B cell (primary cell): ENCODE measurements at regions of chr7 and their contacts with region 1.

Region 1: DNA sequence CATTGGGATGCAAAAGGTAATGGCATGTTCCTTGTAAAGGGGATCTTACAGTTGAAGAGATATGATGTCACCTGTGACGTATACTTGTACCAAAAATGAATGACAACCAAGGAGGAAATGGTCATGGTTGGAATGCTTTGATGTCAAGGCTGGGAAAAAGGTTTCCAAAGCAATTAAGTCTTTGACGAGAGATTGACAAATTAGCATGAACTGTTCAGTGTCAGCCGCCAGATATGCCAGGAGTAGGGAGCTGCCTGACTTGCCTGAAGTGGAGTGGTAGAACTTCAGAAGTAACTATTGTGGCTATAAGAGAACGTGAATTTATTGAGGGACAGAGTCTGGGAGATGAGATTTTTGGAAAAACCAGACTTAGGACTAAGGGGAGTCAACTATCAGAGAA is 88.1 kb downstream of the SEPTIN7 start:
- DNase-seq: no peak
- ATAC-seq: no peak
- H3K4me3 ChIP-seq: no peak overlapping the region
- H3K4me3 Mint-ChIP-seq: no peak overlapping the region
- H3K27ac ChIP-seq: no peak overlapping the region
- H3K27ac Mint-ChIP-seq: no peak overlapping the region
- H3K4me1 ChIP-seq: no peaks in the 10 kb centered on the region
- H3K4me1 Mint-ChIP-seq: peaks cover 12% of the 10 kb centered on the region
- H3K27me3 ChIP-seq: no peaks in the 10 kb centered on the region
- H3K27me3 Mint-ChIP-seq: no peaks in the 10 kb centered on the region
- CTCF ChIP-seq: no peak

Region 2: GRCh38 chr7:35492451-35493175 is 396.4 kb before region 1 on chr7:
- CTCF ChIA-PET with region 1: no interaction called
- POLR2A ChIA-PET with region 1: no interaction called
- intact Hi-C with region 1: no loop called
- DNase-seq: no peak
- ATAC-seq: no peak
- H3K4me3 ChIP-seq: no peak overlapping the region
- H3K4me3 Mint-ChIP-seq: no peak overlapping the region
- H3K27ac ChIP-seq: no peak overlapping the region
- H3K27ac Mint-ChIP-seq: no peak overlapping the region
- H3K4me1 ChIP-seq: peaks cover 0 to 4% of the 10 kb centered on the region in 2 donors
- H3K4me1 Mint-ChIP-seq: no peaks in the 10 kb centered on the region
- H3K27me3 ChIP-seq: peaks cover 0 to 2% (median 0%) of the 10 kb centered on the region in 4 experiments
- H3K27me3 Mint-ChIP-seq: peaks cover 20% of the 10 kb centered on the region
- CTCF ChIP-seq: no peak

Region 3: GRCh38 chr7:35839860-35840854 is 48.8 kb before region 1 on chr7:
- CTCF ChIA-PET with region 1: no interaction called
- POLR2A ChIA-PET with region 1: no interaction called
- intact Hi-C with region 1: no loop called
- DNase-seq: no peak
- ATAC-seq: no peak
- H3K4me3 ChIP-seq: no peak overlapping the region
- H3K4me3 Mint-ChIP-seq: no peak overlapping the region
- H3K27ac ChIP-seq: peak overlapping the region in 1 of 2 donors; percentile 12
- H3K27ac Mint-ChIP-seq: no peak overlapping the region
- H3K4me1 ChIP-seq: no peaks in the 10 kb centered on the region
- H3K4me1 Mint-ChIP-seq: peaks cover 23% of the 10 kb centered on the region
- H3K27me3 ChIP-seq: no peaks in the 10 kb centered on the region
- H3K27me3 Mint-ChIP-seq: no peaks in the 10 kb centered on the region
- CTCF ChIP-seq: no peak

Region 4: DNA sequence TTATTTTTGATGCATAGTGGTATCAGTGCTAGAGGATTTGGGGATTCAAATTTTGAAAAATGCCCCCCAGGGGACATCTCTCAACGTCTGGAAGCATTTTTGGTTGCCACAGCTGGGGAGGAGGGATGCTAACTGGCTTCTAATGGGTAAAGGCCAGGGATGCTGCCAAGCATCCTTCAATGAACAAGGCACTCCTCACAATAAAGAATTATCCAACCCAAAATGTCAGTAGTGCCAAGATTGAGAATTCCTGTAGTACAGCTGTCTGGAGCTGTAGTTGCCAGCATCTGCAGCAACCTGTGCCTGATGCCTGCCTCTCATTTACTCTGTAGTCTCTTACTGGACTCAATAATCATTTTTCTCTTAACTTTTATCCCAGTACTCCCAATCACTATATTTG is 34.7 kb before region 1 on chr7:
- CTCF ChIA-PET with region 1: no interaction called
- POLR2A ChIA-PET with region 1: no interaction called
- intact Hi-C with region 1: loop called (anchors 5 kb)
- DNase-seq: no peak
- ATAC-seq: no peak
- H3K4me3 ChIP-seq: no peak overlapping the region
- H3K4me3 Mint-ChIP-seq: no peak overlapping the region
- H3K27ac ChIP-seq: no peak overlapping the region
- H3K27ac Mint-ChIP-seq: no peak overlapping the region
- H3K4me1 ChIP-seq: no peaks in the 10 kb centered on the region
- H3K4me1 Mint-ChIP-seq: peaks cover 60% of the 10 kb centered on the region
- H3K27me3 ChIP-seq: no peaks in the 10 kb centered on the region
- H3K27me3 Mint-ChIP-seq: no peaks in the 10 kb centered on the region
- CTCF ChIP-seq: no peak